Caco-2 (cell line): ENCODE measurements at regions of chr4 and their contacts with region 1.

Region 1: GRCh38 chr4:71553605-71554004 is 214.8 kb downstream of the SLC4A4 start:
- DNase-seq: peak in 1 of 2 experiments; percentile 13
- H3K4me3 ChIP-seq: no peak overlapping the region
- H3K4me3 Mint-ChIP-seq: no peak overlapping the region
- H3K27ac Mint-ChIP-seq: no peak overlapping the region
- H3K4me1 ChIP-seq: peaks cover 30% of the 10 kb centered on the region
- H3K4me1 Mint-ChIP-seq: peaks cover 13% of the 10 kb centered on the region
- H3K27me3 ChIP-seq: no peaks in the 10 kb centered on the region
- H3K27me3 Mint-ChIP-seq: no peaks in the 10 kb centered on the region
- CTCF ChIP-seq: peak; percentile 46 to 47

Region 2: DNA sequence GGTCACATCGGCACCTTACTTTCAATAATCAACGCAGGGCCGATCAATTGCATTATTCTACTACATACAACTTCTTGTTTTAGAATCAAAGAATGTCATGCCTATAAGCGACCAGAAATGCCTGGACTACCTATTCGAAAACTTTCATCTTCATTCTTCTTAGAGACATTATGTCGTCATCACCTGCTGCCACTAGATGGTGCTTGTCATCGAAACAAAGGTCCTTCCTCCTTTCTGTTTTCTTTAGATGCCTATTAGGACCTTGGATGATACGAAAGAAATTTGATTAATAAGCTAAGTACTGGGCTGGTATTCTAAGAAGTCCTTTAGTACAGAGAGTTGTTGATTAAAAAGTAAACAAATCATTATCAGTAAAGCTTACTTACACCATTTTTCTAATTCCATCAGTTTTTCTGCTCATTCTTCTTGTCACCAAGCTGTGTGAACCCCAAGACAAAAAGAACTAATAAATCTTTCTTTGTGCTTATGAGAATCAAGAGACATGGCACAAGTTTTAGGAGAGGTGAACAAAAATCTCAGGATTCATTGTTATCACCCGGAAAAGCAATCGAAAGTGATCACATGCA is 369.3 kb before region 1 on chr4:
- CTCF ChIA-PET with region 1: no interaction called
- POLR2A ChIA-PET with region 1: no interaction called
- intact Hi-C with region 1: loop called (anchors 1 kb)
- DNase-seq: peak; percentile 35 to 39
- H3K4me3 ChIP-seq: no peak overlapping the region
- H3K4me3 Mint-ChIP-seq: no peak overlapping the region
- H3K27ac Mint-ChIP-seq: no peak overlapping the region
- H3K4me1 ChIP-seq: peaks cover 3% of the 10 kb centered on the region; the same call in 1 of the 2 replicates
- H3K4me1 Mint-ChIP-seq: peaks cover 7% of the 10 kb centered on the region
- H3K27me3 ChIP-seq: peaks cover 3% of the 10 kb centered on the region; the same call in 1 of the 2 replicates
- H3K27me3 Mint-ChIP-seq: peaks cover 23% of the 10 kb centered on the region
- CTCF ChIP-seq: peak; percentile 60 to 68

Region 3: DNA sequence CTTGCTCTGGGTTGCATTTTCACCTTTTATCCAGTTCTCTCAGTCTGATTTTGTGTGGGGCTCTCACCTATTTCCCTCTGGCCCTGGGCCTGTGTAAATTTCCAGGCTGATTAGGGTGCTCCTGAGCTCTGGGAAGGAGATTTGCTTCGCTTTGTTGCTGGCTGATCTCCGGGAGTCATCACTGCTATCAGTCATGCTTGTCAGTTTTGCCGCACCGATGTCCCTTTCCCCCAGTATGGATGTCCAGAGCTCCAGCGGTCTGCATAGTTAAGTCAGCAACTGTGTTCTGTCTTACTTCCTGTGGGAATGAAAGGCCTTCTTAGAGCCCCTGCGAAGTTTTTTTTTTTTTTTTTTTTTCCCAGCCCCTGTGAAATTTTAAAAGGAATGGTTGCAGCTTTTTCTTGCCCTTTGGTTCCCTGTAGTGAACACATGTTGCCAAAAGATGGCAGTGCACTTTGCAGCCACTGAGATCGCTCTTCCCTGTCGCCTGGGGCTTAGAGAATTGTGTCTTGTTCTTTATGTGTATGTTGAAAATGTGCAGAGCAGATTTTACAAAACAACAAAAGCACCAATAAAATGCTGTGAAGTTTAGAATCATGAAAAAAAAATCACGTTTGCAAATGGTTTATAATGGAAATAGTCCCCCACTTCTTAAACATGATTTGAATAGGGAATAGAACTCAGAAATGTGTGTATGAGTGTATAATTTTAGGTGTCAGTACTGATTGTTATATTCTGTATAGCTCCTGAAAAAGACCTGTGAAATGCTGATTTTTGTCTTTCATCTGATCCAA is 323.9 kb before region 1 on chr4:
- CTCF ChIA-PET with region 1: interaction called, 5 read pairs
- POLR2A ChIA-PET with region 1: no interaction called
- intact Hi-C with region 1: loop called (anchors 1 kb)
- DNase-seq: peak in 1 of 2 experiments; percentile 29
- H3K4me3 ChIP-seq: no peak overlapping the region
- H3K4me3 Mint-ChIP-seq: no peak overlapping the region
- H3K27ac Mint-ChIP-seq: no peak overlapping the region
- H3K4me1 ChIP-seq: peaks cover 12% of the 10 kb centered on the region
- H3K4me1 Mint-ChIP-seq: peaks cover 5% of the 10 kb centered on the region
- H3K27me3 ChIP-seq: no peaks in the 10 kb centered on the region
- H3K27me3 Mint-ChIP-seq: peaks cover 4% of the 10 kb centered on the region
- CTCF ChIP-seq: peak; percentile 26 to 59

Region 4: DNA sequence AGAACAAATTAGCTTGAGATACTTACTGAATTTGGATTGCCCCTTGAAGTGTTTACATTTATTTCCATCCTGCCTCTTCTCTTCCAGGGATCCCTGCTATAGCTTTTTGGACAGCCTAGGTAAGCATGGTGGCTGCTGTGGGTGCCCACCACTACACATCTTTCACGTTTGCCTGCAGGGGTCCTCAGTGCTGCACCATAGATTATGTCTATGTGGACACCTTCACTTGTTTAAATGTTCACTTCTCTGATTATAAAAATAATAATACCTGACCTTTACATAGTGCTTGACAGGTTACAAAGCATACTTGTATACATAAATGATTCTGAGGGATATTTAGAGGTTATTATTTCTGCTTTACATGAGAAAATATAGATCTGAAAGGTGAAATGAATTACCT is 282.7 kb before region 1 on chr4:
- CTCF ChIA-PET with region 1: interaction called, 5 read pairs
- POLR2A ChIA-PET with region 1: no interaction called
- intact Hi-C with region 1: loop called (anchors 1 kb)
- DNase-seq: peak; percentile 52
- H3K4me3 ChIP-seq: no peak overlapping the region
- H3K4me3 Mint-ChIP-seq: no peak overlapping the region
- H3K27ac Mint-ChIP-seq: no peak overlapping the region
- H3K4me1 ChIP-seq: no peaks in the 10 kb centered on the region
- H3K4me1 Mint-ChIP-seq: no peaks in the 10 kb centered on the region
- H3K27me3 ChIP-seq: no peaks in the 10 kb centered on the region
- H3K27me3 Mint-ChIP-seq: no peaks in the 10 kb centered on the region
- CTCF ChIP-seq: peak; percentile 47 to 52

Region 5: GRCh38 chr4:71377561-71377960 is 176.0 kb before region 1 on chr4:
- CTCF ChIA-PET with region 1: no interaction called
- POLR2A ChIA-PET with region 1: no interaction called
- intact Hi-C with region 1: no loop called
- DNase-seq: no peak
- H3K4me3 ChIP-seq: no peak overlapping the region
- H3K4me3 Mint-ChIP-seq: no peak overlapping the region
- H3K27ac Mint-ChIP-seq: no peak overlapping the region
- H3K4me1 ChIP-seq: no peaks in the 10 kb centered on the region
- H3K4me1 Mint-ChIP-seq: no peaks in the 10 kb centered on the region
- H3K27me3 ChIP-seq: no peaks in the 10 kb centered on the region
- H3K27me3 Mint-ChIP-seq: no peaks in the 10 kb centered on the region
- CTCF ChIP-seq: no peak

Region 6: GRCh38 chr4:71494539-71494938 is 59.1 kb before region 1 on chr4:
- CTCF ChIA-PET with region 1: no interaction called
- POLR2A ChIA-PET with region 1: no interaction called
- intact Hi-C with region 1: loop called (anchors 2 kb)
- DNase-seq: no peak
- H3K4me3 ChIP-seq: no peak overlapping the region
- H3K4me3 Mint-ChIP-seq: no peak overlapping the region
- H3K27ac Mint-ChIP-seq: no peak overlapping the region
- H3K4me1 ChIP-seq: no peaks in the 10 kb centered on the region
- H3K4me1 Mint-ChIP-seq: no peaks in the 10 kb centered on the region
- H3K27me3 ChIP-seq: no peaks in the 10 kb centered on the region
- H3K27me3 Mint-ChIP-seq: peaks cover 6% of the 10 kb centered on the region
- CTCF ChIP-seq: peak in 1 of 2 experiments; percentile 18